ENCODE measurements at regions of chr12 and their contacts with region 1.

Region 1: DNA sequence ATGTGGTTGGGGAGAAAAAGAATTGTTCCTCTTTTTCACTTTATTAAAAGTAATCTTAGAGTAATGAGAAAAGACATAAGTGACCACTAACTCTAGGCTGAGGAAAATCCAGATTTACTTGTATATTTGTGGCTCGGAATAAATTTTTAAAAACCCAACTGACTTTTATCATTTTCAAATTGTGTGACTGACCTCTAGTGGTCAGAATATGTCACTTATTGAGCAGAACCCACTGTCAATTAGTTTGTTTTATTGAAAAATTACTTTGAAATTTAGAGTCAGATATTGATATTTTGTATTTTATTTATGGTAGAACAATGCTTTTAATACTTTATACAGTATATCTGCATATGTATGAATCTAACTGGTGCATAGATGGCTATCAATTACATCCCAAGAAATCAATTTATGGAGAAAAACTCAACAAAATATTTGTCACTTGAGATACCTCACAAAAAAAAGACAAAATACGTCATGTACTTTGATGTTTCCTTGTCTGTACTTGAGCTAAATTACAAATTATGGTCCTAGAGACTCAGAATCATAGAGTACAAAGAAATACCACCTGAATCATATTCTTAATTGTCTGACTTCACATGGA is 229.4 kb downstream of the CNTN1 start:
- DNase-seq: no peak
- H3K4me3 ChIP-seq: no peak overlapping the region
- H3K27ac ChIP-seq: no peak overlapping the region
- H3K4me1 ChIP-seq: no peaks in the 10 kb centered on the region
- H3K27me3 ChIP-seq: no peaks in the 10 kb centered on the region
- CTCF ChIP-seq: peak; percentile 49 to 71 (median 59)
- EP300 ChIP-seq: no peak
- POLR2A ChIP-seq: no peak

Region 2: GRCh38 chr12:40614923-40615322 is 306.7 kb before region 1 on chr12:
- in situ Hi-C with region 1: loop called (anchors 5 to 10 kb)
- intact Hi-C with region 1: loop called (anchors 10 kb)
- DNase-seq: no peak
- H3K4me3 ChIP-seq: no peak overlapping the region
- H3K27ac ChIP-seq: no peak overlapping the region
- H3K4me1 ChIP-seq: no peaks in the 10 kb centered on the region
- H3K27me3 ChIP-seq: no peaks in the 10 kb centered on the region
- CTCF ChIP-seq: no peak
- EP300 ChIP-seq: no peak
- POLR2A ChIP-seq: no peak

Region 3: DNA sequence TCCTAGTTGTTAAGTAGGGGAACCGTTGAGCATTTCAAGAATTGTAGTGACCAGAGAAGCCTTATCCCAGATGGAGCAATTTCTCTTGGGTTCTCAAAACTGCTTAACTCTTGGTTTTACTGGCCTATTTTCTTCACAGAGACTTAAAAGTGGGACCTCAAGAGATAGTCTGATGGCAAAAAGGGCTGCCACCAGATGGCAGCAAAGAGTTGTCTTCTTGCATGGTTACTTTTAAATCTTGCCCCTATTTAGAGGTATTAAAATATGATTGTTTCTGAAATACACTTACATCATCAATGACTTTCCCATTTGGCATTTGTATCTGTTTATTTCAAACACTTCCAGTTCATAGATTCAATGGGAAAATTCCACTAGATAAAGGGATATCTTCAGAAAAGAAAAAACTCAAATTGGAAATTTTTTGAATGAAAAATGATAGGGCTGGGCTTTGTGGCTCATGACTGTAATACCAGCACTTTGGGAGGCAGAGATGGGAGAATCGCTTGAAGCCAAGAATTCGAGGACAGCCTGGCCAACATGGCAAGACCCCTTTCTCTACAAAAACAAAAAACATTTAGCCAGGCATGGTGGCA is 299.3 kb before region 1 on chr12:
- in situ Hi-C with region 1: loop called (anchors 5 to 10 kb)
- intact Hi-C with region 1: loop called (anchors 10 kb)
- DNase-seq: peak; percentile 41
- H3K4me3 ChIP-seq: no peak overlapping the region
- H3K27ac ChIP-seq: no peak overlapping the region
- H3K4me1 ChIP-seq: no peaks in the 10 kb centered on the region
- H3K27me3 ChIP-seq: no peaks in the 10 kb centered on the region
- CTCF ChIP-seq: peak; percentile 46 to 71 (median 69)
- EP300 ChIP-seq: no peak
- POLR2A ChIP-seq: no peak

Measured in transverse colon (tissue), 4 donors.